Left ventricle myocardium superior (tissue), 1 donor: ENCODE measurements at regions of chr2 and their contacts with region 1.

Region 1: GRCh38 chr2:134118279-134119116 is 135.4 kb upstream of the MGAT5 start:
- DNase-seq: peak; percentile 78
- ATAC-seq: peak; percentile 59

Region 2: GRCh38 chr2:133886735-133887660 is 231.5 kb before region 1 on chr2:
- intact Hi-C with region 1: loop called (anchors 5 kb)
- DNase-seq: peak; percentile 81
- ATAC-seq: peak; percentile 88

Region 3: GRCh38 chr2:134207564-134208209 is 89.2 kb after region 1 on chr2:
- intact Hi-C with region 1: loop called (anchors 5 kb)
- DNase-seq: peak; percentile 64
- ATAC-seq: peak; percentile 68

Region 4: DNA sequence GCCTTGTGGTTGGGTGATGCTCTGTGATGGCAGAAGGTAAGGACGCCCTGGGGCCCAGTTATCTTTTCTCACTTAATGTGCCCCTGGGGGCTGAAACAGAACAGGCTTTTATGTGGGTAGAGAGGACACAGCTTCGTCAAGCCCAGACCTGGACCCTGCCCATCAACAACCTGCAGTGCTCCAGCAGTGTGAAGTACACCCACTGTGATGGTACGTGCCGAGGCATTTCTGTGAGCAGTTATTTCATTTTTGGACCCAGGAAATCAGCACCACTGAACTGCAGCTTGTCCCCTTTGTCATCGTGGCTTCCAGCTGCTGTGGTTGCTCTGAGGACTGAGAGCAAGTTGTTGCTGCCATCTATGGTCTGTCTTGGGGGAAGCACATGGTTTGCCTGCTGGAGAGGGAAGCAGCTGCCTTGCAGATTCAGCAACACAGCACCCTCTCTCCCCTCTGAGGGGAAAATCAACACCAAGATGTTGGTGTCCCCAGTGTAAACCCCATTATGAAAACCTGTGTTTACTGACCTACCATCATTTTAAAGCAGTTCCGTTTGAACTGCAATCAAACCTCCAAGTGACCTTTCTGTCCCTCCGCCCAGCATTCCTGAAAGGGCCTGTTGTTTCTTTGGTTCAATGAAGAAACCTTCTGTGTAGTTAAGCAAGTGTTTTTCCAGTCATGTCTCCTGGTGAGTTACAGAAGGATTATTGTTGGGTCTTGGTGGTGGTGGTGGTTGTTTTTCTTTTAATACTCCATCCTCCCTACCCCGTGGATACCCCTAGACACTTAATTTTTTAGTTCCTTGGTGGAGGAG is 293.5 kb after region 1 on chr2:
- intact Hi-C with region 1: loop called (anchors 5 kb)
- DNase-seq: peak; percentile 57
- ATAC-seq: peak; percentile 95